Esophagus squamous epithelium (tissue), 5 donors: ENCODE measurements at regions of chr2 and their contacts with region 1.

Region 1: GRCh38 chr2:38377050-38377828 is at the start of gene ATL2:
- DNase-seq: peak; percentile 88
- H3K4me3 ChIP-seq: peak within 1 kb of the TSS; percentile 91 to 99 (median 97)
- H3K27ac ChIP-seq: peak within 1 kb of the TSS; percentile 99 to 100 (median 100)
- H3K4me1 ChIP-seq: peaks cover 8 to 51% (median 13%) of the 10 kb centered on the region in 3 donors
- H3K27me3 ChIP-seq: no peaks in the 10 kb centered on the region
- CTCF ChIP-seq: no peak
- POLR2A ChIP-seq: peak in 3 of 4 donors; percentile 93 to 96 (median 96)
- total RNA-seq, gene ATL2: 65.2 to 178 (median 91.3) TPM

Region 2: DNA sequence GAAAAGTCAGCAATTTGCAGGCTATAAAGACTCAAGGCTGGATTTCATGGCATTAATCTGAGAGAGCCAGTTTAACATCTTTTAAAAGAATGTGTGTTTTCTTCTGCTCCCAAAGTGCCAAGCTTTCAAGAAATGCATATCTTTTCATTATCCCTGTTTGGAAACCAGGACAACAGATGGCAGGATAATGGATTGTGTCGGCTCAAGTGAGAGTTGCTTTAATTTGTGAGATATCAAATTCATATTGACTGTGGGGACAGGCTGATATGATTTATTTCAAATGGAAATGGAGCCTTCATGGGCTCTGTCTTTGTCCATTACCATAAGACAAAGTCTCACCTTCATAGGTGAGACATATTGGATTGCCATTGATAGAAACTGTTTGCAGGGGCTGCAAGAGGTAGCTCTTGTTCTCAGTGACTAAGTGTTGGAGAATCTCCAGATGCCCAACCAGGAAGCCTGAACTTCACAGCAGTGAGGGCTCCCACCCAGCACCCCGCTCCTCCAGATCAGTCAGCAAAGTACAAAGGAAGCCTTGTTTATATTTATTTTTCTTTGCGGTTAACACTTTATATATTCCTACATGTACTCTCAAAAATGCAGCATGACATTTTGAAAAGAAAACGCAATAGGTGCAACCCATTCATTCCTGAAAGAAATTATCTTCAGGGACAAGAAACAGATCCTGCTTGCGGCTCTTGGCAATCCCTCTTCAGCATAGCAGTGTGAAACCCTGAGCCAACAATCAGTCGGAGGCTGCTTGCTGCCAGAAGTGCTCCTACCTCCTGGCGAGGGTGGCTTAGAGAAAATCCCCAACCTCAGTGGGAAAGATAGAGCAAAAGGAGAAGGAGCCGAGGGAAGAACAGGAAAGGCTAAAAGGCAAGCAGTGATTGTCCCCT is 65.7 kb after region 1 on chr2:
- intact Hi-C with region 1: loop called (anchors 10 kb)
- DNase-seq: no peak
- H3K4me3 ChIP-seq: no peak overlapping the region
- H3K27ac ChIP-seq: peak overlapping the region; percentile 40 to 62 (median 57)
- H3K4me1 ChIP-seq: peaks cover 19 to 96% (median 30%) of the 10 kb centered on the region in 3 donors
- H3K27me3 ChIP-seq: no peaks in the 10 kb centered on the region
- CTCF ChIP-seq: no peak
- POLR2A ChIP-seq: no peak

Region 3: DNA sequence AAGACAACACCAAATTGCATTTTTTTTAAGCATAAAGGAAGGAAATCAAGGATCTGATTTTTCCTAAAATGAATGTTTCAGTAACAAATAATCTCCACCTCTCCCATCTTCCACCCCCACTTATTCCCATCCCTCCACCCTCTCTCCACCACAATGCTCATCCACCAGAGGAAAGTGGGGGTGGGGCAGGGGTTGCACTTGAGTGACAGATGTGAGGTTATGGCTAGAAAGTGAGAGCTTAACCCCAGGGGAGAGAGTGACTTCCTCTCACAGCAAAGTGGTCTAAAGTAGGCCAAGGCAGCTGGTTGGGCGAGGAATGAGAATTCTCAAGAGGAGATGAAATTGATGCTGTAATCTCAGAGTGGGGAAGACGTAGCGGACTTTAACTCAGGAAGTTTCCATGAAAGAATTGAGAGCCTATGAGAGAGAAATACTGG is 120.8 kb after region 1 on chr2:
- intact Hi-C with region 1: no loop called
- DNase-seq: no peak
- H3K4me3 ChIP-seq: no peak overlapping the region
- H3K27ac ChIP-seq: peak overlapping the region in 1 of 4 donors; percentile 34
- H3K4me1 ChIP-seq: peaks cover 0 to 19% (median 3%) of the 10 kb centered on the region in 3 donors
- H3K27me3 ChIP-seq: no peaks in the 10 kb centered on the region
- CTCF ChIP-seq: no peak
- POLR2A ChIP-seq: no peak